B cell (primary cell): ENCODE measurements at regions of chr17 and their contacts with region 1.

Region 1: DNA sequence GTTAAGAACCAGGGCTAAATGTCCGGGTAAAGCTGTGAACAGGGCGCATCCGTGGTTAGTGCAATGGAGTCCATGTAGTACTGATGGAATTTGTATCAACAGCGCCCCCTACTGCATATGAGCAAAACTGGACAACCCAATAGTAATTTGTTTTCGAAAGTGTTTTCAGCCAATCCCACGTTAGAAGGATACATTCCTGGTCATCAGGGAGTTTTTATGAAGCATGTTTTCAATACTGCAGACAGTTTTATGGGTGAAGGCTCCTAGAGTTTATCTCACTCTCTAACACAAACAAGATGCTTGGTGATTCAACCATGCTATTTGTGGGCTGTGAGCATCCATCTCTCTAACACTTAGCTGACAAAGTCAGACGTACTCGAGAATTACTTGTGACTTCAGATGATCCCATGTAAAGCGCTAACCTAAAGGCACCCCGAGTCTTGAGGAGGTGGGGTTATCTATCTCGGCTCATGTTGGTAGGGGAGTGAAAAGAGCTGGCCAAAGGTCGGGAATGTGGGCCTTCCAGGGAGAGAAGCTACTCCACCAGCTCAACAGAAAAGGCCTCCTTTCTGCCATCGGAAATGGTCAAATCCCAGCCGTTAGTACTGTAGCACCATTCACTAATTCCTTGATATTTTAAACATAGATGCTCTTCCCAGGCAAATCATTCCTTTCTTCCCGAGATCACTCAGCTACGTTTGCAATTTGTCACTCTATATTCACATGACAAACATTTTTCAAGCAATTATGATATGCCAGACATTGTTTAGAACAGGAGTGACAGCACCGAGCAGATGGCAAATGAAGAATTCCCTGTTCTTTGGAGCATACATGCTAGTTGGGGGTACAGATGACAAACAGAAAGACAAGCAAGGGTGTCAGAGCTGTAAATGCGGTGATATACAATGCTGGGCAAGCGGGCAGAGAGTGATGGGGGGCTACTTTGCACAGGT is 46.9 kb upstream of the HNF1B start:
- DNase-seq: peak; percentile 77
- ATAC-seq: peak; percentile 69
- H3K4me3 ChIP-seq: no peak overlapping the region
- H3K4me3 Mint-ChIP-seq: no peak overlapping the region
- H3K27ac ChIP-seq: no peak overlapping the region
- H3K27ac Mint-ChIP-seq: no peak overlapping the region
- H3K4me1 ChIP-seq: no peaks in the 10 kb centered on the region
- H3K4me1 Mint-ChIP-seq: peaks cover 5% of the 10 kb centered on the region
- H3K27me3 ChIP-seq: peaks cover 0 to 12% (median 4%) of the 10 kb centered on the region in 4 experiments
- H3K27me3 Mint-ChIP-seq: peaks cover 33% of the 10 kb centered on the region
- CTCF ChIP-seq: peak; percentile 81

Region 2: DNA sequence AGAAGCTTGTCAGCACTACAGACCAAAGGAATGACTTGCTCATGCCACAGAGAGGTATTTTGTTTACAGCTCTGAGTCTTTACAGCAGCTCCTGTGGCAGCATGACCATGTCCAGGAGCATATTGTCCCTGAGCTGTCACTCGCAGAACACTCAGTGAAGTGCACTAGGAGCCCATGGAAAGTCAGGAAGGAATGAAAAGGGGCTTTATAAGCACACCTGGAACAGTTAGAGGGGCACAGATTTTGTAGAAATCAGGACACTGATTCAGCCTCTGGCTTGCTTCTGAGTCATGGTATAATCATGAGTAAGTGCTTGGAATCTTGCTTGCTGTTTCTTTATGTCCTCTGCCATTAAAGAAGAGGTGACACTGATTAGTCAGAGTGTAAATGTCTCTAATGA is 344.1 kb before region 1 on chr17:
- CTCF ChIA-PET with region 1: no interaction called
- POLR2A ChIA-PET with region 1: no interaction called
- intact Hi-C with region 1: no loop called
- DNase-seq: no peak
- ATAC-seq: no peak
- H3K4me3 ChIP-seq: no peak overlapping the region
- H3K4me3 Mint-ChIP-seq: no peak overlapping the region
- H3K27ac ChIP-seq: no peak overlapping the region
- H3K27ac Mint-ChIP-seq: no peak overlapping the region
- H3K4me1 ChIP-seq: no peaks in the 10 kb centered on the region
- H3K4me1 Mint-ChIP-seq: no peaks in the 10 kb centered on the region
- H3K27me3 ChIP-seq: no peaks in the 10 kb centered on the region
- H3K27me3 Mint-ChIP-seq: no peaks in the 10 kb centered on the region
- CTCF ChIP-seq: no peak

Region 3: DNA sequence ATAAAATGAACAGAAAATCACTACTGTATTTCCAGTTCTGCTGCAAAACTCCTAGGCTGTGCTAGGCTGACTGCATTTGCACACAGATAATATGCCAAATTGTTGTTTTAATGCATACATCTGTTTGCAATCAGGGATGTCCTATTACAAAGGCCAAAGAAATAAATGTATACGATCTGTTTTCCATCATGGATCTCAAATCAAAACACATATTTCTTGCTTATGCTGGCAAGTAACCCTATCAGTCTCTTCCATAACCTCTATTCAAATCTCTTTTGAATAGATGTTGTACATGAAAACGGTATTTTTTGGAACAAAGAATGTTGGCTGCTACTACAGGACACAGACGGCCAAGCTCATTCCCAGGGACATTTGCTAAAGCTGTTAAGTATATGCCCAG is 245.4 kb before region 1 on chr17:
- CTCF ChIA-PET with region 1: no interaction called
- POLR2A ChIA-PET with region 1: no interaction called
- intact Hi-C with region 1: no loop called
- DNase-seq: no peak
- ATAC-seq: no peak
- H3K4me3 ChIP-seq: no peak overlapping the region
- H3K4me3 Mint-ChIP-seq: no peak overlapping the region
- H3K27ac ChIP-seq: no peak overlapping the region
- H3K27ac Mint-ChIP-seq: no peak overlapping the region
- H3K4me1 ChIP-seq: peaks cover 0 to 3% of the 10 kb centered on the region in 2 donors
- H3K4me1 Mint-ChIP-seq: peaks cover 14% of the 10 kb centered on the region
- H3K27me3 ChIP-seq: no peaks in the 10 kb centered on the region
- H3K27me3 Mint-ChIP-seq: no peaks in the 10 kb centered on the region
- CTCF ChIP-seq: no peak

Region 4: DNA sequence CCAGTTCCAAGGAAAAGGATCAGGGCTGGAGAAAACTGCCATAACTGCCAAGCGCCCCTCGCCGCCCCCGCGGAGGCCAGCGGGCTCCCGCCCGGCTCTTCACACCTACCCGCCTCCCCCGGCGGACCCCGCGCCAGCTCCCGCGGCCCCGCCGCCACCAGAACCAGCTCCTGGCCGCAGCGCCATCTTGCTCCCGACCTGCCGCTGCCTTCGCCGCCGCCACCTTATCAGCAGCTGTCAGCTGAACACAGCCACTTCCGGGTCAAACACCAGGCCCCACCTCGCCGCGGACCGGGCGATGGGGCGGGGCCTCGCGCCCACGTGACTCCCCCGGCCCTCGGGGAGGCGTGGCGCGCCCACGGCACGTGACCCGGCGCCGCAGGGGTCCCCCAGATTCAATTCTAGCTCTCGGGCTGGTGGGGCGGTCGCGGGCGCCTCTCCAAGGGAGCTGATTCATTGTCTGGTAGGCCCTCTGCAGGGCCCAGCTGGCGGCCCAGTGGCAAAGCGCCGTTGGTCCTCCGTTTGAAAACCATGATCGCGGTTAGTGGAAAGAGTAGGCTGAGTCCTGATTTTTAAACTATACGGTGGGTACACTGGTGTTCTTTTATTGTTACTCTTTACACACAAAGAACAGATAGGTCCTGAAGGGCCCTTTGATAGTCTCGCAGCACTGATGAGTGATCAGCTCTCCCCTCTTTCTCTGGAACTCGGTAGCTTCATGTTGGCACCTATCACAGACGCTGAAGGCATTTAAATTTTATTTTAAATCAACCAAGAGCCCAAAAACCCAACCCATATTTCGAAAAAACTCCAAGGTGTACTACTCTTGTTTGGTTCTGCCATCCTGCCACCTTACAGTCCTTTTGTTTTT is 182.3 kb before region 1 on chr17 and contains the start of gene SYNRG:
- CTCF ChIA-PET with region 1: interaction called, 19 read pairs
- POLR2A ChIA-PET with region 1: no interaction called
- intact Hi-C with region 1: loop called (anchors 1 kb)
- DNase-seq: peak; percentile 97
- ATAC-seq: peak; percentile 87
- H3K4me3 ChIP-seq: peak within 1 kb of the TSS; percentile 80 to 94 (median 89)
- H3K4me3 Mint-ChIP-seq: peak within 1 kb of the TSS; percentile 95
- H3K27ac ChIP-seq: peak within 1 kb of the TSS; percentile 80 to 86
- H3K27ac Mint-ChIP-seq: peak within 1 kb of the TSS; percentile 97
- H3K4me1 ChIP-seq: peaks cover 24 to 37% of the 10 kb centered on the region in 2 donors
- H3K4me1 Mint-ChIP-seq: peaks cover 39% of the 10 kb centered on the region
- H3K27me3 ChIP-seq: no peaks in the 10 kb centered on the region
- H3K27me3 Mint-ChIP-seq: no peaks in the 10 kb centered on the region
- CTCF ChIP-seq: peak; percentile 70
- total RNA-seq, gene SYNRG: 113 and 115 TPM in 2 replicates

Region 5: DNA sequence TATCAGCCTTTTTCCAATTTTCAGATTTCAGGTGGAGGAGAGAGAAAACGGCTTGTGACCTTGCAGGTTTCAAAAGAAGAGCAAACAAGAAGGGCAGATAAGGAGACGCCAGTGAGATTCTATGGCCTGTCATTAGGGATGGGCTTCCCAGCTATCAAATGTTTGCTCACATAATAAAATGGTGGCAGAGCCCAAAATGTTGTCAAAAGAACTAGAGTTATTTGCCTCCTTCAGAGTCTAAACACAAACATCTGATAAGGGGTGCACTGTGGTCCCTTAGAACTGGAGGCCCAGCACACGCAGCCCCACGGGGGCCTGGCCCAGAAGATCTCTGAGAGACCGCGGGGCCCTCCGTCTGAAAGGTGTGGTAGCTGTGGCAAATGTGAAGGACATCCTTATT is 102.4 kb before region 1 on chr17:
- CTCF ChIA-PET with region 1: no interaction called
- POLR2A ChIA-PET with region 1: no interaction called
- intact Hi-C with region 1: no loop called
- DNase-seq: no peak
- ATAC-seq: no peak
- H3K4me3 ChIP-seq: no peak overlapping the region
- H3K4me3 Mint-ChIP-seq: no peak overlapping the region
- H3K27ac ChIP-seq: no peak overlapping the region
- H3K27ac Mint-ChIP-seq: no peak overlapping the region
- H3K4me1 ChIP-seq: no peaks in the 10 kb centered on the region
- H3K4me1 Mint-ChIP-seq: no peaks in the 10 kb centered on the region
- H3K27me3 ChIP-seq: peaks cover 0 to 2% (median 0%) of the 10 kb centered on the region in 4 experiments
- H3K27me3 Mint-ChIP-seq: peaks cover 7% of the 10 kb centered on the region
- CTCF ChIP-seq: no peak

Region 6: GRCh38 chr17:37701496-37701898 is 90.2 kb before region 1 on chr17:
- CTCF ChIA-PET with region 1: interaction called, 86 read pairs
- POLR2A ChIA-PET with region 1: no interaction called
- intact Hi-C with region 1: loop called (anchors 1 kb)
- DNase-seq: peak; percentile 76
- ATAC-seq: peak; percentile 91
- H3K4me3 ChIP-seq: peak overlapping the region; percentile 14 to 45 (median 25)
- H3K4me3 Mint-ChIP-seq: peak overlapping the region; percentile 67
- H3K27ac ChIP-seq: no peak overlapping the region
- H3K27ac Mint-ChIP-seq: peak overlapping the region; percentile 28
- H3K4me1 ChIP-seq: peaks cover 0 to 6% of the 10 kb centered on the region in 2 donors
- H3K4me1 Mint-ChIP-seq: peaks cover 7% of the 10 kb centered on the region
- H3K27me3 ChIP-seq: peaks cover 0 to 6% (median 0%) of the 10 kb centered on the region in 4 experiments
- H3K27me3 Mint-ChIP-seq: peaks cover 29% of the 10 kb centered on the region
- CTCF ChIP-seq: peak; percentile 89

Region 7: GRCh38 chr17:37816950-37817349 is 25.2 kb after region 1 on chr17:
- CTCF ChIA-PET with region 1: interaction called, 18 read pairs
- POLR2A ChIA-PET with region 1: no interaction called
- intact Hi-C with region 1: no loop called
- DNase-seq: no peak
- ATAC-seq: no peak
- H3K4me3 ChIP-seq: no peak overlapping the region
- H3K4me3 Mint-ChIP-seq: no peak overlapping the region
- H3K27ac ChIP-seq: no peak overlapping the region
- H3K27ac Mint-ChIP-seq: no peak overlapping the region
- H3K4me1 ChIP-seq: peaks cover 26 to 37% of the 10 kb centered on the region in 2 donors
- H3K4me1 Mint-ChIP-seq: peaks cover 28% of the 10 kb centered on the region
- H3K27me3 ChIP-seq: peaks cover 0 to 11% (median 8%) of the 10 kb centered on the region in 4 experiments
- H3K27me3 Mint-ChIP-seq: peaks cover 21% of the 10 kb centered on the region
- CTCF ChIP-seq: no peak

Region 8: DNA sequence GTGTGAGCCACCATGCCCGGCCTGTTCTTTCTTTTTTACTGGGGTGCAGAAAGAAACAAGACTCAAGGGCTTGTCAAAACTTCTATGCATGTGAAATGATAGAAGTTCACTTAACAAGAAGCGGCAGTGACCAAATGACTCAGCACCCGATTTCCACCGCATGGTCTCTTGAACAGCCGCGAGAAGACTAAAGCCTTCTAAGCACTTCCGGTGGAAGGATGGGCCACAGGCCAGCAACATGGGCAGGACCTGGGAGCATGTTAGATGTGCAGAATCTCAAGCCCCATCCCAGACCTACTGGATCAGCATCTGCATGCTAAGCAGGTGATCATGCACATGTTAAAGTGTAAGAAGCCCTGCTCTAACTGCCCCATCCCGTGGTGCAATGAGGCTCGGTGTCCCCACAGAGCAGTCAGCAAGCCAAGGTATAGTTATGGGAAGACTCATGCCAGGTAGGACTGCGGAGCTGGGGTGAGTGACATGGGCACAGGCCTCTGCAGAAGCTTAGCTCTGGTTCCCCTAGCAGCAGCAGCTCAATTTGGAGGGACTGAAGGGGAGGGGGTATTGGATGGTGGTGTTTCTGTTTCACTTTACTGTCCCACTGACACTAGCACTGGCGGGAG is 41.6 kb after region 1 on chr17:
- CTCF ChIA-PET with region 1: no interaction called
- POLR2A ChIA-PET with region 1: no interaction called
- intact Hi-C with region 1: no loop called
- DNase-seq: no peak
- ATAC-seq: no peak
- H3K4me3 ChIP-seq: no peak overlapping the region
- H3K4me3 Mint-ChIP-seq: no peak overlapping the region
- H3K27ac ChIP-seq: no peak overlapping the region
- H3K27ac Mint-ChIP-seq: no peak overlapping the region
- H3K4me1 ChIP-seq: peaks cover 22% of the 10 kb centered on the region in 2 donors
- H3K4me1 Mint-ChIP-seq: peaks cover 30% of the 10 kb centered on the region
- H3K27me3 ChIP-seq: peaks cover 0 to 3% (median 0%) of the 10 kb centered on the region in 4 experiments
- H3K27me3 Mint-ChIP-seq: peaks cover 12% of the 10 kb centered on the region
- CTCF ChIP-seq: no peak